ENCODE measurements at regions of chr1 and their contacts with region 1.

Region 1: DNA sequence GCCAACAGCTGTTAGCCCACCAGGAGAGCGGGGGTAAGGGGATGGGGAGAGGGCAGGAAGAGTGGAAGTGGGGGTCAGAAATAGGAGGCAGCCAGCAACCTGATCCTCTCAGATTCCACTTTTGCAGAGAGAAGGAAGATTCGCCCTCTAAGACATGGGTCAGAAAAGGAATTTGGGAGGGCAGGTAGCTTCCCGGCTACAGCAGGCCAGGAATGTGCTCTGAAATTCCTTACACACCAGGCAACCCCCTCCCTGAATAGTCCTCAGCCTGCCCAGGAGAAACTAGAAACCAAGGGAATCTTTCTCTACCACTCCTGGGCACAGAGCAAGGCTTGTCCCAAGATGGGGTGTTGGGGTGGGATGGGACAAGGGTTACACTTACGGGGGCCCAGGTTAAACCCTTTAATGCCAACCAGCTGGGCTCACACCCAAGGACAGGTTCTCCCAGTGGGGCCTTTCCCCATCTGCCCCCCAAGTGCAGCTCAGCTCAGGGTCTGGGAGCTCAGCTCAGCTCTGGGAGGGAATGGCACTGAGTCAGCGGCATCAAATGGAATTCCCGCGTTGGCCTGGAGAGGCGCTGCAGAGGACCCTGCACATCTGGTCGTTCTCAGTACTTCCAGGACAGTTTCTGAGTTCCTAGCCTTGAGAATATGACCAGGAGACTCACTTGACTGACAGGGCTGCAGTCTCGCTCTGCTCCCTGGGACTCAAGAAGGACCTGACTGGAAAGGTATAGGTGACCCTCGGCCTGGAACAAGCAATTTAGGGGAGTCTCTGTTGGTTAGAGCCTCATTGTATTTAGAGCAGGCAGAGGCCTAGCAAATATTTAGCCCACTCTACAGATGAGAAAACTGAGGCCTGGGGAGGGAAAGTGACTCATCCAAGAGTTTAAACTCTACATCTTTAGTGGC is 761 bp downstream of the TNNT2 start:
- DNase-seq: peak; percentile 39
- ATAC-seq: peak; percentile 82
- H3K4me3 ChIP-seq: no peak overlapping the region
- H3K27ac ChIP-seq: no peak overlapping the region
- H3K4me1 ChIP-seq: no peaks in the 10 kb centered on the region
- H3K27me3 ChIP-seq: peaks cover 0 to 38% of the 10 kb centered on the region in 2 experiments; a peak in 4 of 5 replicates
- CTCF ChIP-seq: peak; percentile 65
- EP300 ChIP-seq: no peak
- POLR2A ChIP-seq: no peak
- RAD21 ChIP-seq: 0 out of 2 replicates have a peak, but pooled peaks have one; percentile 10

Region 2: DNA sequence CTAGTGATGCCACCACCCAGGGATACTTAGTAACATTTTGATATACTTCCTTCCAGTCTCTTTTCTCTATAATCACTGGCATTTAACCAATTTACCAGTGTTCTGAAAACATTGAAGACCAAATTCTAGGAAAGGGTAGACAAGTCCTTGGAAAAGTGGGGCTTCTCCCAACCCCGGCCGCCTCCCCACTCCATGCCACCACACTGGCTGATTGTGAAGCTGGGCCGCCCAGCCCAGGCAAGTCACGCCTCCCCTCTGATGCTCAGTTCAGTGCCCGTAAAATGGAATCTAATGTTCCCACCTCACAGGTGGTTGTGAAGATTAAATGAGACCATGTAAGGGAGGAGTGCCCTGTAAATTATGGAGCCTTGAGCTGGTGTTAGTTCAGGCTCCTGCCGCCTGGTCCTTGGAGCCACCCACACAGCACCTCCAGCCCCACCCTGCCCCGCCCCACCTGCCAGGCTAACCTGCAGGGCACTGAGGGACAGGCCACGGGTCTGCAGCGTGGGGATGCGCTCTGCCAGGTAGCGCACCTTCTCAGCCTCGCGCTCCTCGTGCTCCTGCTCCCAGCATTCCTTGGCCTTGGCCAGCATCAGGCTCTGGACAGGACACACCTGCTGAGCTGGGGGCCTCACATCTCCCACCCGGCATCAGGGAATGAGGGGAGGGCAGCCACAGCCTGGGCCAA is 37.5 kb after region 1 on chr1:
- CTCF ChIA-PET with region 1: no interaction called
- POLR2A ChIA-PET with region 1: no interaction called
- in situ Hi-C with region 1: loop called (anchors 5 kb)
- intact Hi-C with region 1: no loop called
- DNase-seq: no peak
- ATAC-seq: no peak
- H3K4me3 ChIP-seq: no peak overlapping the region
- H3K27ac ChIP-seq: no peak overlapping the region
- H3K4me1 ChIP-seq: no peaks in the 10 kb centered on the region
- H3K27me3 ChIP-seq: peaks cover 3 to 13% of the 10 kb centered on the region in 2 experiments; a peak in 2 of 5 replicates
- CTCF ChIP-seq: no peak
- EP300 ChIP-seq: no peak
- POLR2A ChIP-seq: no peak
- RAD21 ChIP-seq: no peak

Measured in HepG2 (cell line).